Activated CD8-positive, alpha-beta T cell treated with anti-CD3 and anti-CD28 coated beads for 36 hours (primary cell): ENCODE measurements at regions of chrX and their contacts with region 1.

Region 1: GRCh38 chrX:153662266-153662665 is 11.3 kb downstream of the PNCK start:
- DNase-seq: peak; percentile 71
- ATAC-seq: no peak
- H3K4me3 Mint-ChIP-seq: peak overlapping the region; percentile 47
- H3K27ac Mint-ChIP-seq: no peak overlapping the region
- H3K4me1 Mint-ChIP-seq: no peaks in the 10 kb centered on the region
- H3K27me3 Mint-ChIP-seq: peaks cover 10% of the 10 kb centered on the region
- CTCF ChIP-seq: peak; percentile 43

Region 2: GRCh38 chrX:153539171-153539978 is 122.9 kb before region 1 on chrX:
- CTCF ChIA-PET with region 1: interaction called, 40 read pairs
- POLR2A ChIA-PET with region 1: interaction called, 3 read pairs
- intact Hi-C with region 1: no loop called
- DNase-seq: peak; percentile 63
- ATAC-seq: peak; percentile 94
- H3K4me3 Mint-ChIP-seq: no peak overlapping the region
- H3K27ac Mint-ChIP-seq: no peak overlapping the region
- H3K4me1 Mint-ChIP-seq: no peaks in the 10 kb centered on the region
- H3K27me3 Mint-ChIP-seq: no peaks in the 10 kb centered on the region
- CTCF ChIP-seq: peak; percentile 63

Region 3: DNA sequence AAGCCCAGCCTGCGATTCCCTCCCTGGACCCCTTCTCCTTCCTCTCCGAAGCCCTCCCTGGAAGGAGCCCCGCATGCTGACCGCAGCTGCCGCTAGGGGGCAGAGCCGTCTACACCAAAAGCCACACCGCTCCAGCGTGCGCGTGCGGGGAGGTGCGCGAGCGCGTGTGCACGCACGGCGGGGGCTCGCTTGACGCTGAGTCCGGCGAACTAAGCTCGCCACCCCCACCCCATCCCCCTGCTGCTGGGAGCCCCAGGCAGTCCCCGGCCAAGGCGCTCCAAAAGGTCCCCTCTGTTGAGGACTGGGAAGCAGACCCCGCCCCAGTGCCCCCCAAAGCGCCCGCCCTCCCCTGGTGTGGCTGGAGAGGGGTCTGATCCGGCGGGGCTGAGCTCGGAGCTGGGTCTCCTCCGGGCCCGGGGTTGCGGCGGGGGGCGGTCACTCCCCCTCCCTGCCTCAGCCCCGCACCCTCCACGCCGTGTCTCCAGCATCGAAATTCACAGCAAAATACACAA is 52.3 kb before region 1 on chrX:
- CTCF ChIA-PET with region 1: interaction called, 27 read pairs
- POLR2A ChIA-PET with region 1: interaction called, 3 read pairs
- intact Hi-C with region 1: loop called (anchors 10 kb)
- DNase-seq: peak; percentile 81
- ATAC-seq: peak; percentile 94
- H3K4me3 Mint-ChIP-seq: peak overlapping the region; percentile 60
- H3K27ac Mint-ChIP-seq: no peak overlapping the region
- H3K4me1 Mint-ChIP-seq: peaks cover 4% of the 10 kb centered on the region
- H3K27me3 Mint-ChIP-seq: no peaks in the 10 kb centered on the region
- CTCF ChIP-seq: peak; percentile 66

Region 4: DNA sequence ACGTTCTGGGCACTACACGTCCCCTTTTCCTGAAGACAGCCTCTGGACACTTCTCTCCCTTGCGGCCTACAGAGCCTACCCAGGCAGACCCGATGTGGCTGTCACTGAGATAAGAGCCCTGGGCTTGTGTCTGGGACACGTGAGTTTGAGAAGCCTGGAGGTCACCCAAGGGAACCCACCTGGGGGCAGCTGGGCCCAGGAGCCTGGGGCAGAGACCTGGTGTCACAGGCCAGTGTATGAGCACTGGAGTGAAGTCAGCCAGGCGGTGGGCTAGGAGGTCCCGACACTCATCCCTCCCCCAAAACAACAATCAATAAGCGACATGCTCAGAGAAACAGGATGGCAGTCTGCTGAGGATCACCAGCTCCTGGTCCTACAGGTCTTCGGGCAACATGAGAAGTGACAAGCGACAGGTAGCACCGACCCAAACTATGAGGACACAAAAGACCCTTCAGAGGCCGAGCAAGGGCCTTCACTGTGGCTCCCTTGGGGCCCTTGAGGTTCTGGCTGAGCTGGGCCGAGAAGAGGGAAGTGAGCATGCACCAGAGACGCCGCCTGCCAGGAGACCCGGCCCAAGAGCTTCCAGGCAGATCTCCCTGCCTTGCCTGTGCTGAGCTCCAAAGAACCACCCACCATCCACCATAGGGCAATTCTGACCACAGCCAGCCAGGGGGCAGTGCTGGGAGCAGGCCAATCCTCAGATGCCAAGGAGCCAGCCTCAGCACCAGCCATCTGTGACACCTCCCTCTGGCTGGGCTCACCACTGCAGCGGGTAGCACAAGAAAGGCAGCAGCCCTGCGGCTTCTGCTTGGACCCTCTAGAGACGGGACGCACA is 26.3 kb before region 1 on chrX:
- CTCF ChIA-PET with region 1: interaction called, 5 read pairs
- POLR2A ChIA-PET with region 1: no interaction called
- intact Hi-C with region 1: loop called (anchors 2 kb)
- DNase-seq: peak; percentile 49
- ATAC-seq: peak; percentile 84
- H3K4me3 Mint-ChIP-seq: no peak overlapping the region
- H3K27ac Mint-ChIP-seq: no peak overlapping the region
- H3K4me1 Mint-ChIP-seq: no peaks in the 10 kb centered on the region
- H3K27me3 Mint-ChIP-seq: peaks cover 5% of the 10 kb centered on the region
- CTCF ChIP-seq: peak; percentile 27

Region 5: GRCh38 chrX:153649178-153649914 is 12.9 kb before region 1 on chrX:
- CTCF ChIA-PET with region 1: interaction called, 29 read pairs
- POLR2A ChIA-PET with region 1: no interaction called
- intact Hi-C with region 1: no loop called
- DNase-seq: peak; percentile 55
- ATAC-seq: peak; percentile 91
- H3K4me3 Mint-ChIP-seq: no peak overlapping the region
- H3K27ac Mint-ChIP-seq: no peak overlapping the region
- H3K4me1 Mint-ChIP-seq: peaks cover 2% of the 10 kb centered on the region
- H3K27me3 Mint-ChIP-seq: peaks cover 23% of the 10 kb centered on the region
- CTCF ChIP-seq: peak; percentile 57

Region 6: GRCh38 chrX:153697924-153698865 is 35.9 kb after region 1 on chrX:
- CTCF ChIA-PET with region 1: no interaction called
- POLR2A ChIA-PET with region 1: no interaction called
- intact Hi-C with region 1: no loop called
- DNase-seq: no peak
- ATAC-seq: no peak
- H3K4me3 Mint-ChIP-seq: no peak overlapping the region
- H3K27ac Mint-ChIP-seq: peak overlapping the region; percentile 39
- H3K4me1 Mint-ChIP-seq: no peaks in the 10 kb centered on the region
- H3K27me3 Mint-ChIP-seq: no peaks in the 10 kb centered on the region
- CTCF ChIP-seq: no peak